ENCODE measurements at regions of chr1 and their contacts with region 1.

Region 1: DNA sequence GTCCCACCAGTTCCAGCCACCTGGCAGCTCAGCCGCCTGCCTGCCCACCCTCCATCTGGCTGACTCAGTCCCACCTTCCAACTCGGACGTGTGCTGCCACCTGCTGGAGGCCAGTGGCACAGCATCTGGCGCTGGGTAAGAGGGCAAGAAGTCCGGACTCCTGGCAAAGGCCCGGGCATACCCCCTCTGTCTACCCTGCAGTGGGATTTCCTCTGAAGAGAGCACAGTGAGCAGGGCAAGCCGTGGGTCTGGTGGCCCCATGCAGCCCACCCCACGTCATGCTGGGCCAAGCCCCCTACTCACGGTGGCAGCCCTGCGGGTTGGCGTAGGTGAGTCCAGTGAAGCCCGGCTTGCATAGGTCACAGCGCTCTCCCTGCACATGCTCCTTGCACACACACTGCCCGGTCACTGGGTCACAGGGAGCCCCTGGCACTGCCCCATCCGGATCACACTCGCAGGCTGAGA is 24.5 kb downstream of the LAMB3 start:
- DNase-seq: peak; percentile 91

Region 2: DNA sequence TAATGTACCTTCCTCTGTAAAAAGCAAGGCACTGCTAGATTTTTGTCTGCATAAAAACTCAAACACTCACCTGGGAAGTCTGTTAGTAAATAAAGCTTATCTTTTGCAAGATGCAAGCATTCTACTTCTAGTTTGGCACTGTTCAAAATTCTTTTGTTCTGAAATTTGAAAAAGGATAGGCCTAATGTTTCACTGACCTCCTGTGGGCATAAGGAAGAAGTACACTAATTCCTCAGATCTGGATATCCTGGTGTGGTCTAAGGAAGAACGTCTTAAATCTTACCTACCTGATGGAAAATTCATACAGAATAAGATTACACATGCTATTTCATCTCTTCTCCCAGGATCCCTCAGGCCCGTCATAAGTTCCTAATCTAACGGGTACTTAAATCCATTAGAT is 137.8 kb before region 1 on chr1:
- intact Hi-C with region 1: no loop called
- DNase-seq: no peak

Region 3: DNA sequence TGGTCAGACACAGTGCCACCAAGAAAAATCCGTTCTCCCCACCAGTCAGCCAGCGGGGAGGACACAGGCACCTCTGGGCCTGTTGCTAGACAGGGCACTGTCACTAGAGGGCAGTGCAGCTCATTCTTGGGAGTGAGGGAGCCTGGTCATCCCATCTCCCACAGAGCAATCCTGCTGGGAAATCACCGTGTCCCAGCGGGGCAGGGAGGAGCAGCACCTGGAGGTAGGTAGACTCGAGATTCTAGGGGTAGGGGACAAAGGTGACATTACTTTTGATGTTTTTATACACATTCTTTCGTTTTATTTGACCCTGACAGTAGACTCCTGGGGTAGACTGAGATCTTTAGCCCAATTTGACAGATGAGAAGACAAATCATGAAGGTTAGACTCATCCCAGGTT is 51.0 kb before region 1 on chr1:
- intact Hi-C with region 1: loop called (anchors 2 kb)
- DNase-seq: peak; percentile 91

Region 4: GRCh38 chr1:209601809-209602657 is 25.7 kb before region 1 on chr1:
- intact Hi-C with region 1: loop called (anchors 1 kb)
- DNase-seq: no peak

Region 5: GRCh38 chr1:209643285-209644020 is 15.7 kb after region 1 on chr1:
- intact Hi-C with region 1: loop called (anchors 2 kb)
- DNase-seq: peak; percentile 88

Region 6: GRCh38 chr1:209692745-209693504 is 65.2 kb after region 1 on chr1:
- intact Hi-C with region 1: loop called (anchors 2 kb)
- DNase-seq: peak; percentile 83